PC-3 (cell line): ENCODE measurements at regions of chr3 and their contacts with region 1.

Region 1: GRCh38 chr3:42547401-42547945 is 34.3 kb downstream of the SEC22C start:
- DNase-seq: peak; percentile 76
- ATAC-seq: peak; percentile 61
- H3K4me3 ChIP-seq: no peak overlapping the region
- H3K27ac ChIP-seq: no peak overlapping the region
- H3K4me1 ChIP-seq: peaks cover 15% of the 10 kb centered on the region
- H3K27me3 ChIP-seq: no peaks in the 10 kb centered on the region
- CTCF ChIP-seq: peak; percentile 98

Region 2: GRCh38 chr3:42247576-42248027 is 299.9 kb before region 1 on chr3:
- CTCF ChIA-PET with region 1: no interaction called
- POLR2A ChIA-PET with region 1: no interaction called
- intact Hi-C with region 1: loop called (anchors 1 kb)
- DNase-seq: peak; percentile 88
- ATAC-seq: peak; percentile 77
- H3K4me3 ChIP-seq: no peak overlapping the region
- H3K27ac ChIP-seq: no peak overlapping the region
- H3K4me1 ChIP-seq: no peaks in the 10 kb centered on the region
- H3K27me3 ChIP-seq: peaks cover 8% of the 10 kb centered on the region
- CTCF ChIP-seq: peak; percentile 96

Region 3: DNA sequence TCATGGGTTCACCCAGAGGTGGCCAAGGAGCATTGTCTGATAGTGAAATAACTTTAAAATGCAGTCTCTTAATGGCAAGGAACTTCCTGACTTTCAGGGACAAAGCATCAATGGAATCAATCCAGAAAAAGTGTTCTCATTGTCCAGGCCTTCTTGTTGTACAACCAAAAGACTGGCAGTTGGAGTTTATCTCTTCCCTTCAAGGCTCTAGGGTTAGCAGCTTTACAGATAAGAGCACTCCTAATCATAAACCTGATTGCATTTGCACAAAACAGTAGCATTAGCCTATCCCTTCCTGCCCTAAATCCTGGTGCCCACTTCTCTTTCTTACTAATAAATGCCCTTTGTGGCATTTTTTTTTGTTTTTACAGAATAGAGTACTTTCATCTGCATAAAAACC is 88.3 kb before region 1 on chr3:
- CTCF ChIA-PET with region 1: no interaction called
- POLR2A ChIA-PET with region 1: no interaction called
- intact Hi-C with region 1: no loop called
- DNase-seq: no peak
- ATAC-seq: no peak
- H3K4me3 ChIP-seq: no peak overlapping the region
- H3K27ac ChIP-seq: no peak overlapping the region
- H3K4me1 ChIP-seq: no peaks in the 10 kb centered on the region
- H3K27me3 ChIP-seq: no peaks in the 10 kb centered on the region
- CTCF ChIP-seq: no peak

Region 4: GRCh38 chr3:42502429-42503250 is 44.8 kb before region 1 on chr3 and contains the start of gene VIPR1:
- CTCF ChIA-PET with region 1: interaction called, 12 read pairs
- POLR2A ChIA-PET with region 1: interaction called, 3 read pairs
- intact Hi-C with region 1: loop called (anchors 2 kb)
- DNase-seq: peak; percentile 92
- ATAC-seq: peak; percentile 89
- H3K4me3 ChIP-seq: peak within 1 kb of the TSS; percentile 67
- H3K27ac ChIP-seq: no peak within 1 kb of the TSS
- H3K4me1 ChIP-seq: peaks cover 19% of the 10 kb centered on the region
- H3K27me3 ChIP-seq: no peaks in the 10 kb centered on the region
- CTCF ChIP-seq: no peak
- total RNA-seq, gene VIPR1: 3.7 and 7.0 TPM in 2 replicates

Region 5: GRCh38 chr3:42590989-42591756 is 43.7 kb after region 1 on chr3:
- CTCF ChIA-PET with region 1: no interaction called
- POLR2A ChIA-PET with region 1: no interaction called
- intact Hi-C with region 1: no loop called
- DNase-seq: no peak
- ATAC-seq: peak; percentile 6
- H3K4me3 ChIP-seq: peak overlapping the region; percentile 72
- H3K27ac ChIP-seq: peak overlapping the region; percentile 43
- H3K4me1 ChIP-seq: peaks cover 22% of the 10 kb centered on the region
- H3K27me3 ChIP-seq: no peaks in the 10 kb centered on the region
- CTCF ChIP-seq: no peak

Region 6: DNA sequence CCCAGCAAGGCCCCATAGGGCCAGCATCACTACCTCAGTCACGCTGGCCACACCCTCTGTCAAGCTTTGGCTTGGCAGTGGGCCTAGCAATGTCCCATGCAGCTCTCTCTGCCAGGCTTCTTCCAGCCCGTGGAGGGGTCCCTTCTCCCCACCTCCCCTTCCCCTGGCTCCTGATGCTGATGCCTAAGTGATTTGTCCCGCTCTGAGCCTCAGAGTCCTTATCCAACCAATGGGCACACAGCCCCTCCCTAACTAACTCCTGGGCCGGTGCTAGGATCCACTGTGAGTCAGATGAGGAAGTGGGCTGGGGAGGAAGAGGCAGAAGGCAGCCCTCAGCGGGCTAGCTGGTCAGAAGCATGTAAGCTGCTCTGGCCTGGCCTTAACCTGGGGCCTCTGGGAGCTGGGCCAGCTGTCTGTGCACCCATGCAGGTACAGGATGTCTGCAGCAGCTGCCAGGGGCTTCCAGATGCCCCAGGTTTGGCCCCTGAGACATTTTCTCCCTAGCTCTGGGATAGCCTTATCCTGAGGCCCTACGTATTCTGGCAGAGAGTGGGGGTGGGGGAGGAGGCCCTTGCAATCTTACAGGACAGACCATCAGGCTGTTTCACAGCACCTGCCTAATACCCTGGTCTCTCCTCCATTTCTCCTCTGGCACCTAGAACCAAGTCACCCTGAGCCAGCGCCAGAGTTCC is 105.3 kb after region 1 on chr3:
- CTCF ChIA-PET with region 1: no interaction called
- POLR2A ChIA-PET with region 1: no interaction called
- intact Hi-C with region 1: no loop called
- DNase-seq: peak; percentile 90
- ATAC-seq: peak; percentile 75
- H3K4me3 ChIP-seq: peak overlapping the region; percentile 85
- H3K27ac ChIP-seq: peak overlapping the region; percentile 53
- H3K4me1 ChIP-seq: peaks cover 28% of the 10 kb centered on the region
- H3K27me3 ChIP-seq: no peaks in the 10 kb centered on the region
- CTCF ChIP-seq: no peak